ENCODE measurements at regions of chr21 and their contacts with region 1.

Region 1: GRCh38 chr21:28181730-28182129 is 810.9 kb downstream of the LTN1 start:
- DNase-seq: no peak
- H3K4me3 ChIP-seq: no peak overlapping the region
- H3K27ac ChIP-seq: no peak overlapping the region
- H3K4me1 ChIP-seq: no peaks in the 10 kb centered on the region
- H3K27me3 ChIP-seq: no peaks in the 10 kb centered on the region
- CTCF ChIP-seq: no peak
- POLR2A ChIP-seq: no peak

Region 2: GRCh38 chr21:28220680-28221079 is 39.0 kb after region 1 on chr21:
- CTCF ChIA-PET with region 1: no interaction called
- POLR2A ChIA-PET with region 1: no interaction called
- dilution Hi-C with region 1: no loop called
- intact Hi-C with region 1: loop called (anchors 5 kb)
- DNase-seq: peak; percentile 16
- H3K4me3 ChIP-seq: no peak overlapping the region
- H3K27ac ChIP-seq: no peak overlapping the region
- H3K4me1 ChIP-seq: no peaks in the 10 kb centered on the region
- H3K27me3 ChIP-seq: no peaks in the 10 kb centered on the region
- CTCF ChIP-seq: no peak
- POLR2A ChIP-seq: no peak

Region 3: DNA sequence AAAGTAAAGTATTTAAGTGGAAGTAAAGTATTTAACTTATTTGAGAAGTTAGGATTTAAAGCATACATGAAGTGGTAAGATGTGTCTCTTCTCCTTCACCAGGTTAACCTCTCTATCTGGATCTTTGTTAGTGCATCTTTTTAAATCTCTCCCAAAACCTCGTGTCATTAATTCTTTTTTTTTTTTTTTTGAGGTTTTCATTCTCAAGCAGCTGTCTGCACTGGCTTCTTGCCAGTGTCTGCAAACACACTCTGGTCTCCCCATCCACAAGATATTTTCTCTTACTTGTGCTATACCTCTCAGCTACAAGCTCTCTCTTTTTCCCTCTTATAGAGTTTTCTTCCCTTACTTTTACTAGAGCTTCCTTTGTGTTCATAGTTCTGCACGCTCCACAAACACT is 1935.9 kb after region 1 on chr21:
- CTCF ChIA-PET with region 1: no interaction called
- POLR2A ChIA-PET with region 1: no interaction called
- dilution Hi-C with region 1: no loop called
- intact Hi-C with region 1: no loop called
- DNase-seq: no peak
- H3K4me3 ChIP-seq: no peak overlapping the region
- H3K27ac ChIP-seq: no peak overlapping the region
- H3K4me1 ChIP-seq: no peaks in the 10 kb centered on the region
- H3K27me3 ChIP-seq: no peaks in the 10 kb centered on the region
- CTCF ChIP-seq: no peak
- POLR2A ChIP-seq: no peak